OCI-LY7 (cell line): ENCODE measurements at regions of chr6 and their contacts with region 1.

Region 1: GRCh38 chr6:137641474-137642077 is 147.4 kb upstream of the OLIG3 start:
- DNase-seq: peak; percentile 76
- H3K4me3 ChIP-seq: no peak overlapping the region
- H3K27ac ChIP-seq: no peak overlapping the region
- H3K4me1 ChIP-seq: peaks cover 5% of the 10 kb centered on the region
- CTCF ChIP-seq: peak; percentile 86

Region 2: DNA sequence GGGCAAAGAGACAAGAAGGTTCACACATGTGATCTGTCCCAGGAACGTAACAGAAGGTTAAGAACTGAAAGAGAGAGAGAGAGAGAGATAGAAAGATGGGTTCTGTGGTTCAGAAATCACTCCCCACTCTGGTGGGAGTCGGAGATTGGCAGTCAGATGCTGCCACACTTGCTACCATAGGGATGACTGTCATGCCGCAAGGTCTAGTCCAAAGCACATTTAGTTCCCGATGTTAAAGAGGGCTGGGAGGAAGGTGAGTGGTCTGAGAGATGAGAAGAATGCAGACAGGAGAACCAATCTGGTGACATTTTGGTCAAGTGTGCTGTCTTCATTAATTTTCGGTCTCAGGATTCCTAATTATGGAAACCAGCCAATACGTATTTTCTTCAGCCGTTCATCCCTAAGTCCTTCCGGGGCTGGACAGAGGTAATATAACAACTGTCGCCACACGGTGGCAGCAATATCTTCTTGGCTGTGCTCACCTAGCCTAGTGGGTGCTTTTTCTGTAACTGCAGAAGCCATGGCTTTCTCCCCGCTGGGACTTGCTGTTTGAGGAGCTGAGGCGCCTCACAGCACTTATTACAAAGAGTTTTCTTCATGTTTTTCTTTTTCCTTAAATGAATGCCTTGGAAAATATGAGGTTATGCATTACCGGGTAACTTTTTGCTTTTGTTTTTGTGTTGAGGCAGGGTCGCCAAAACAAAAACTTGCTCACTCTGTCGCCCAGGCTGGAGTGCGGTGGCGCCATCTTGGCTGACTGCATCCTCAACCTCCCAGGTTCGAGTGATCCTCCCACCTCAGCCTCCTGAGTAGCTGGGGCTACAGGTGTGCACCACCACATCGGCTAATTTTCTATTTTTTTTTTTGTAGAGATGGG is 673.5 kb before region 1 on chr6:
- CTCF ChIA-PET with region 1: no interaction called
- POLR2A ChIA-PET with region 1: no interaction called
- intact Hi-C with region 1: loop called (anchors 2 kb)
- DNase-seq: peak; percentile 79
- H3K4me3 ChIP-seq: peak overlapping the region; percentile 43
- H3K27ac ChIP-seq: no peak overlapping the region
- H3K4me1 ChIP-seq: no peaks in the 10 kb centered on the region
- CTCF ChIP-seq: peak; percentile 88

Region 3: GRCh38 chr6:137076277-137077068 is 565.1 kb before region 1 on chr6:
- CTCF ChIA-PET with region 1: no interaction called
- POLR2A ChIA-PET with region 1: no interaction called
- intact Hi-C with region 1: loop called (anchors 2 kb)
- DNase-seq: peak; percentile 82
- H3K4me3 ChIP-seq: no peak overlapping the region
- H3K27ac ChIP-seq: no peak overlapping the region
- H3K4me1 ChIP-seq: no peaks in the 10 kb centered on the region
- CTCF ChIP-seq: peak; percentile 93

Region 4: DNA sequence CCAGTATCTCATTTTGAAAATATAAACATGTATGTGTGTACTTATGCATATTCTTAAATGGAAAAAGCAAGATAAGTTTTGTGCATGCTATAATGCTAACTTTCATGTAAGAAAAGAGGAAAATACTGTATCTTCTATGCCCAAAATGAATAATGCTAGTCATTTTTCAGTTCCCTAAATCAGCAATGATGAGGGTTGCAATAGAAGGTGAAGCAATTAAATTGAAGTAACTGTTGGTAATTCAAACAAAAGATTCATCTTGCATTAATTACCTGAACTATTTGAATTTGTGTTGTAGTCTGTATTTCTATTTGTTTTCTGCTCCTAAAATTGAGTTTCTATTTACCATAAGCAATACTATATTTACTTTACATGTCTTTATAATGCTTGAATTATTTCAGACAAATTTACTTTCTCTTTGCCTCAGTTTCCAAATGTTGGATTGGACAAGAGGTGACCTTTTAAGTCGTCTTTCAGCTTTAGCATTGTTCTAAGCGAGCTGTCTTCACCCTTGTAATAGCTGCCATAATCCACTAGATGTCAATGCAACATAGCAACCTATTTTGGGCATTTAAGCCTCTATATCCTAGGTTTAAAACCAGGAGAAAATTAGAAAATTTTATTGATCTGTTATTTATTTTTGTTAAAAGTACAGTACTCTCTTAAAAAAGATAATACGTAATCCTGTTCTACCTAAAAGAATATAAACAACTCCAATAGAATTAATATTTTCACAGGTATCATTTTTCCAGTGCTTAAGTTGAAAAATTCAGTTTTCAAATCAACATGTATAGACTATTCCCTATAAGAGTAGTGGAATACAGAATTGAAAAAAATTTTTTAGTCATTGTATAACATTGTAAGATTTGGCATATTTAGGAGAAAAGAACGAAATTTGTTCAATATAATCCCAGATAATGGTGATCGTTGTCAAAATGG is 370.1 kb before region 1 on chr6:
- CTCF ChIA-PET with region 1: no interaction called
- POLR2A ChIA-PET with region 1: no interaction called
- intact Hi-C with region 1: loop called (anchors 1 kb)
- DNase-seq: peak; percentile 66
- H3K4me3 ChIP-seq: no peak overlapping the region
- H3K27ac ChIP-seq: no peak overlapping the region
- H3K4me1 ChIP-seq: no peaks in the 10 kb centered on the region
- CTCF ChIP-seq: peak; percentile 97

Region 5: DNA sequence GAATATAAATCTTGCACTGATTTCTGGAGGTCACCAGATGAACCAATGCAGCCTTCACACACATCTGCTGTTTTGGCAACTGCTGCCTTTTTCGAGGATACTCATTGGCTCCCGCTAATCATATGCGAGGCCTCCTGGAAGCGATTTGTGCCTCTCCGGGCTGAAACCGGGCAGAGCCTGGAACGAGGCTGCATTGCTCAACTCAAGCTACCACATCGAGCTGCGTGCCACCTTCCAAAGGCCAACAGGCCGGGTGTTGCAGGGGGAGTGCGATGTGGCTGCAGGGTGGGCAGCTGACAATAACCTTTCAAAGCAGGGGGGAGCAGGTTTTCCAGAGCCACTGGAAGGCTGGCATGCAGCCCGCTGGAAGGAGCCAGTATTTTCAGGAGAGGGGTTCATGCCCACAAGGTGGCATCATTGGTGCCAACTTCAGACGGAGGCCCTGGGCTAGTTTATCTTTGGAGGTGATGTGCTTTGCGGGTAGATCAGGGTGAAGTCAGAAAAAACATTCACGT is 299.8 kb before region 1 on chr6:
- CTCF ChIA-PET with region 1: no interaction called
- POLR2A ChIA-PET with region 1: no interaction called
- intact Hi-C with region 1: loop called (anchors 1 kb)
- DNase-seq: peak; percentile 47
- H3K4me3 ChIP-seq: no peak overlapping the region
- H3K27ac ChIP-seq: no peak overlapping the region
- H3K4me1 ChIP-seq: peaks cover 23% of the 10 kb centered on the region
- CTCF ChIP-seq: peak; percentile 77

Region 6: DNA sequence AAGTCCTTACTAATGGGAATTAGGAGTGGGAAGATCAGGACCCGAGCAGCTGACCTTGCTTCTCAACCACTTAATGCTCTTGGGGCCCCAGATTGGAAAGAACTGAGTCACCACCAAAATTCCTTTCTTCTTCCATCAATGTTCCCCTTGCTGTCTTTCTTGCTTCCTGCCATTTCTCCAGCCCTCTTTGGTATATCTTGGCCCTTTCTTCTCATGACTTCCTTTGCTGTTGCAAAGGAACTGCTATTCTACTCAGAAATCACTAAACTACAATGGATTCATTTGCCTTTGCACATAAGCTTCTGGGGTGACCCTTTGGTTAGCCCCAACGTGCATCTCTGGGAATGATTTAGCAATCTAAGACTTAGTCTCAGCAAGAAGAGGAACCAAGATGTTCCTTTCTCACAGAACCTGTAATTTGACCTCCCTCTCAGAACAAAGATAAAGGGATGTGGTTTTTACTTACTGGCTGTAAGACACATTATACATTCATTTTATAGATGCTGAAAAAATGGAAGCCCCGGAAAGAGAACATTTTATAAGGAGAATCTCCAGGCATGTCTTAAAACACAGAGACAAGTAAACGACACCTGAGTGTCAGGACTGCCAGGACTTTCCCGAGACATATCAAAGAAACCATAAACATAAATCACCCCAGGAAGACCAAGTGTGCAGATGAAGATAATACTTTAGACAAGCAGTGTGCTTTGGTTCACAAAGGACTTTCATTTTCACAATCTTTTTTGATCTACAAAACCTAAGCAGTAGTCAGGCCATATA is 126.5 kb after region 1 on chr6:
- CTCF ChIA-PET with region 1: no interaction called
- POLR2A ChIA-PET with region 1: no interaction called
- intact Hi-C with region 1: no loop called
- DNase-seq: peak; percentile 42
- H3K4me3 ChIP-seq: no peak overlapping the region
- H3K27ac ChIP-seq: no peak overlapping the region
- H3K4me1 ChIP-seq: peaks cover 12% of the 10 kb centered on the region
- CTCF ChIP-seq: no peak